Activated CD8-positive, alpha-beta T cell treated with anti-CD3 and anti-CD28 coated beads for 36 hours (primary cell): ENCODE measurements at regions of chr19 and their contacts with region 1.

Region 1: GRCh38 chr19:18251587-18252369 is 22.5 kb downstream of the IQCN start:
- DNase-seq: peak; percentile 91
- ATAC-seq: peak; percentile 95
- H3K4me3 Mint-ChIP-seq: no peak overlapping the region
- H3K27ac Mint-ChIP-seq: no peak overlapping the region
- H3K4me1 Mint-ChIP-seq: peaks cover 2% of the 10 kb centered on the region
- H3K27me3 Mint-ChIP-seq: peaks cover 21% of the 10 kb centered on the region
- CTCF ChIP-seq: peak; percentile 90

Region 2: DNA sequence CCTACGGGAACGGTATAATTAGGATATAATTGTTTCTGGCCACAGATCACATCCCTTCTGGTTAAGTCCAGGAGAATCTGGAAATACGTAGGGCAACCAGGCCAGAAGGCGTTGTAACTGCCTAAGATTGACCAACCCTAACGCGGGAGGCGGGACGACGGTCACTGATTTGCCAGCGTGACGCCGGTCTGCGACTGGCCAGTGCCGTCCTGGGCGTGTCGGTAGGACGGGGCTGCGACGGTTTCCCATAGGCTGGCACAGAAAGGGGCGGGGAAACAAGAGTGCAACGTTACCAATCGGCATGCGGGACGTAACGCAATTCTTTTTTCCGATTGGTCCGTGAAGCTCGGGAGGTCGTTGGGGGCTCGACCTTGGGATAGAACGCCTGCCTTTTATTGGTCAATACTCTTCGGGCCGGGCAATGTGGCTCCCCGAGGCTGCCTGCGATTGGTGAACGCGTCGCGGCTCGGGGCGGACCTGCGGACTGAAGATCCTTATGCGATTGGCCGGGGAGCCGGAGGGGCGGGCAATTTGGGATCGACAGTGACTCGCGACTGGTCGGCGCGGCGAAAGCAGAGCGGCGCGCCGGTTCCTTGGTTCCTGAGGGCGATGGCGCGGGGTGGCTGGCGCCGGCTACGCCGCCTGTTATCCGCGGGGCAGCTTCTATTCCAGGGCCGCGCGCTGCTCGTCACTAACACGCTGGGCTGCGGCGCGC is 58.9 kb before region 1 on chr19 and contains the start of gene MPV17L2:
- CTCF ChIA-PET with region 1: interaction called, 52 read pairs
- POLR2A ChIA-PET with region 1: interaction called, 4 read pairs
- intact Hi-C with region 1: no loop called
- DNase-seq: peak; percentile 99
- ATAC-seq: peak; percentile 93
- H3K4me3 Mint-ChIP-seq: peak within 1 kb of the TSS; percentile 79
- H3K27ac Mint-ChIP-seq: peak within 1 kb of the TSS; percentile 88
- H3K4me1 Mint-ChIP-seq: peaks cover 20% of the 10 kb centered on the region
- H3K27me3 Mint-ChIP-seq: no peaks in the 10 kb centered on the region
- CTCF ChIP-seq: no peak
- total RNA-seq, gene MPV17L2: 8.5 to 9.6 TPM

Region 3: DNA sequence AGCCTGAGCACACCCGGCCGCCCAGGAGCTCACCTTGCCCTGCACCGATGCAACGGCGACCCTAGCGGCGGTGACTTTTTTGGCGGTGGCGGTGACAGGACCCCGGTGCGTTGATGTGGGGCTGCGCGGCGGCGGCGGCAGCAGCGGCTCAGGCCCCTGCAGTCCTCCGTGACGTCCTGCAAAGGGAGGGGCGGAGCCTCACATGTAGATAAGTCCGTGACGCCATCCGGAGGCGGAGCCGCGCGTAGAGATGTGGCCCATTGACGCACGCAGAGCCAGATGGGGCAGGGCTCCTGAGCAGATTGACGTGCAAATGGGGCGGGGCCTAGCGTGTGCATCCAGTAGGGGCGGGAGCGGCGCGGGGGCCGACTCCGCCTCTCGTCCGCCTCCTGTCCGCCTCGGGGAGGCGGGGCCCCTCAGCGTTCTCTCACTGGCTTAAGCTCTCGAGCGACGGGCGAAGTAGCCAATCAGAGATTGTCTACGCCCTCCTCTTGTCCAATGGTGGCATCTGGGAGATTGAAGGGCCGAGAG is 47.9 kb before region 1 on chr19 and contains the start of gene RAB3A:
- CTCF ChIA-PET with region 1: interaction called, 185 read pairs
- POLR2A ChIA-PET with region 1: interaction called, 3 read pairs
- intact Hi-C with region 1: no loop called
- DNase-seq: peak; percentile 100
- ATAC-seq: peak; percentile 93
- H3K4me3 Mint-ChIP-seq: peak within 1 kb of the TSS; percentile 98
- H3K27ac Mint-ChIP-seq: peak within 1 kb of the TSS; percentile 89
- H3K4me1 Mint-ChIP-seq: peaks cover 21% of the 10 kb centered on the region
- H3K27me3 Mint-ChIP-seq: peaks cover 6% of the 10 kb centered on the region
- CTCF ChIP-seq: no peak
- total RNA-seq, gene RAB3A: 8.9 to 11.3 TPM

Region 4: DNA sequence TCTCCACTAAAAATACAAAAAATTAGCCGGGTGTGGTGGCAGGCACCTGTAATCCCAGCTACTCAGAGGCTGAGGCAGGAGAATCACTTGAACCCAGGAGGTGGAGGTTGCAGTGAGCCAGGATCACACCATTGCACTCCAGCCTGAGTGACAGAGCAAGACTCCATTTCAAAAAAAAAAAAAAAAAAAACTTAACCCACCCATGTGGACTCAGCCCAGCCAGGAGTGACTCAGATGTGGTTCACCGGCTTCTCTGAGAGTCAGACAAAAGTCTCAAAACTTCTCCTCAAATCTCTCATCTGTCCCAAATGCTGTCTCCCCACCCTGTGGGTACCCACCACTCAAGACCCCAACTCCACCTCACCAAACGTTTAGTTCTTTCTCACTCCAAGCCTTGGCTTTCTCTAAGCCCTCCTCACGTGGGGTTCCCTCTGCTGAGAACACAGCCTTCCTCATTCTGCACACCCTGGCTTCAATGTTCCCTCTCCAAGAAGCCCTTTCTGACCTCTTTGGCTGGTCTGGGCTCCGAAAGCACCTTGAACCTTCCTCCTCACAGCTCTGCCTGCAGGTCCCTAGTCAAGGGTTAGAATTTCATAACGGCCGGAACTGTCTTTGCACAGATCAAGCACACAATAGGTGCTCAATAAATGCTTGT is 36.9 kb before region 1 on chr19:
- CTCF ChIA-PET with region 1: interaction called, 185 read pairs
- POLR2A ChIA-PET with region 1: no interaction called
- intact Hi-C with region 1: loop called (anchors 5 kb)
- DNase-seq: peak; percentile 33
- ATAC-seq: peak; percentile 84
- H3K4me3 Mint-ChIP-seq: no peak overlapping the region
- H3K27ac Mint-ChIP-seq: no peak overlapping the region
- H3K4me1 Mint-ChIP-seq: peaks cover 6% of the 10 kb centered on the region
- H3K27me3 Mint-ChIP-seq: peaks cover 3% of the 10 kb centered on the region
- CTCF ChIP-seq: no peak

Region 5: DNA sequence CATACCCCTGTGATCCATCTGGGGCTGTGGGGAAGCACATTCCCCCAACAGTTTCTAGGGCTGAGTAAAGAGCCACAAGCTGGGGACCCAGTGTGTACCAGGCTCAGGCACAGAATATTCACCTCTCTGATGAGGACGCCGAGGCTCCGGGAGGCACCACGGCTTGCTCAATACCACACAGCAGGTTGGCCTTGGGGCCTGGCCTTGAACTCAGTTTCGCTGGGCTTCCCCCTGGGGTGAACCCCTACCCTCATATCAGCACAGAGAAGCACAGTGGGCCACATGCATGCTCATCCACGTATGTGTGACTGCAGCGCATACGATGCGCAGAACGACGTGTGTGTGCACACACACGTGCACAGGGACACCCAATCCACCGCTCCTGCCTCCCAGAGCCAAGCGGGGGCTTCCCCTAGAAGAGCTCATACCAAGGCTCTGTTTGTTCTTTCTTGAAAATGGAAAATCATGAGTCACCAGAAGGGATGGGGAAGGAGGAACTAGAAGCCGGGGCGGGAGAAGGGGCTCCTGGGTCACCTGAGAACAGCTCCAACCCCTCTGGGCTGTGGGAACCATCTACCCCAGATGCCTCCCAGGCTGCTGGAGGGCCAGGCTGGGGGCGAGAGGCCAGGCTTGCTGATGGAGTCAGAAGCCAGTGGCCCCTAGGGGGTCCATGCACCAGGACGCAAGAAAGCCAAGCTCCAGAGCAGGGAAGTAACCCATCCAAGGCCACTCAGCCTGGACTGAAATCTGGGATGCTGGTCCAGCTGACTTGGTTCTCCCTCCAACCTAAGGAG is 20.6 kb before region 1 on chr19:
- CTCF ChIA-PET with region 1: interaction called, 14 read pairs
- POLR2A ChIA-PET with region 1: interaction called, 4 read pairs
- intact Hi-C with region 1: no loop called
- DNase-seq: no peak
- ATAC-seq: peak; percentile 45
- H3K4me3 Mint-ChIP-seq: no peak overlapping the region
- H3K27ac Mint-ChIP-seq: no peak overlapping the region
- H3K4me1 Mint-ChIP-seq: peaks cover 12% of the 10 kb centered on the region
- H3K27me3 Mint-ChIP-seq: peaks cover 66% of the 10 kb centered on the region
- CTCF ChIP-seq: no peak

Region 6: DNA sequence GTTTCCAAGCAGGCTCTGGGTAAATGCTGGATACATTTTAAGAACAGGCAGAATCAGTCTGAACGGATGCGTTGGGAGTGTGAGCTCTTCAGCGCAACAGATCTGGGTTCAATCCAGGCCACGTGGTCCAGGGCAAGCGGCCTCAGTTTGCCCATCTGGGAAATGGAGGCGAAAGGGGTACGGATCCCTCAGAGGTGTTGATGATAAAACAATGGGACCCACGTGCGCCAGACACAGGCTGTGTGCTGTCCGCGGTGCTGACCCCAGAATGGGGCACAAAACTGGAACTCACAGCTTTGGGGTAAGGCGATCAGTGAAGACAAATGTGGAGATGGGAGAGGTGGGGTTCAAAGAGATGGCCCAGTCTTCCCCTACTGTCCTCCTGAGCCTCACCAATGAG is 12.5 kb before region 1 on chr19:
- CTCF ChIA-PET with region 1: interaction called, 43 read pairs
- POLR2A ChIA-PET with region 1: no interaction called
- intact Hi-C with region 1: no loop called
- DNase-seq: no peak
- ATAC-seq: no peak
- H3K4me3 Mint-ChIP-seq: no peak overlapping the region
- H3K27ac Mint-ChIP-seq: no peak overlapping the region
- H3K4me1 Mint-ChIP-seq: no peaks in the 10 kb centered on the region
- H3K27me3 Mint-ChIP-seq: peaks cover 28% of the 10 kb centered on the region
- CTCF ChIP-seq: no peak